ENCODE measurements at regions of chr5 and their contacts with region 1.

Region 1: DNA sequence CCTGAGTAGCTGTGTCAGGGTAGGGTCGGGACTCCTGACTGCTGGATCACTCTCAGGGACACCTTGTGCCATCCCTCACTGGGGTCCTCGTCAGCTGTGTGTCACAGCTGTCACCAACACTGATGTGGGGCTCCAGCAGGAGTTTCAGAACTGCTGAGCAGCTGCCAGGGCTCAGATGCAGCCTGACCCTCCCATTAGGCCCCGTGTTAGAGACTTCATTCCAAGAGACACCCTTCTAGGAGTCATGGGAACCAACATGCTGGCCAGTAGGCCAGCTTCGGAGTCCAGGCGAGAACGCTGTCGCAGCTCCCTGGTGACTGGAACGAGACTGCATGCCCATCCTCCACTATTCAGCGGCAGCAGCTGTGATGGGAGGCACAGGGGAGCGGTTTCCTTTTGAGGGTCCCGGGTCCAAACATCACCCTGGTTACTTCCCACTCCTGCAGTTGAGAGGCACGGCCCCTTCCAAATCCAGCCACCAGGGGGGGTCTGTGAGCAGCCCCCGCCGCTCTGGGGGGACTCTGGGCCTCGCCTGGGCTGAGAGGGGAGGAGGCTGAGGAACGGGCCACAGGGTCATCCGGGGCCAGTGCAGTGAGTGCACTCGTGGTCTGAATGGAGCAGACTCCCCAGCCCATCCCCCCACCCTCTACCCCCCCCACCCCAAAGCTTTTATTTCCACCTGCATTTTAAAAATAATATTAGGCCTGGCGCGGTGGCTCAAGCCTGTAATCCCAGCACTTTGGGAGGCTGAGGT is 12.6 kb upstream of the TCF7 start:
- DNase-seq: peak; percentile 59 to 79 (median 75)
- H3K4me3 ChIP-seq: peak overlapping the region in 1 of 7 experiments; percentile 45
- H3K27ac ChIP-seq: no peak overlapping the region
- H3K4me1 ChIP-seq: peaks cover 0 to 8% (median 2%) of the 10 kb centered on the region in 4 experiments
- H3K27me3 ChIP-seq: no peaks in the 10 kb centered on the region

Region 2: GRCh38 chr5:134073404-134073803 is 28.5 kb before region 1 on chr5:
- CTCF ChIA-PET with region 1: interaction called, 11 read pairs
- POLR2A ChIA-PET with region 1: no interaction called
- DNase-seq: peak in 2 of 3 donors; percentile 32 to 44
- H3K4me3 ChIP-seq: no peak overlapping the region
- H3K27ac ChIP-seq: no peak overlapping the region
- H3K4me1 ChIP-seq: peaks cover 0 to 12% (median 10%) of the 10 kb centered on the region in 4 experiments
- H3K27me3 ChIP-seq: peaks cover 0 to 7% (median 0%) of the 10 kb centered on the region in 5 experiments

Region 3: GRCh38 chr5:134113902-134114875 is 12.3 kb after region 1 on chr5 and contains the start of gene TCF7:
- CTCF ChIA-PET with region 1: interaction called, 55 read pairs
- POLR2A ChIA-PET with region 1: no interaction called
- DNase-seq: peak; percentile 54 to 71 (median 66)
- H3K4me3 ChIP-seq: peak within 1 kb of the TSS; percentile 21 to 83 (median 64)
- H3K27ac ChIP-seq: no peak within 1 kb of the TSS
- H3K4me1 ChIP-seq: peaks cover 0 to 26% (median 21%) of the 10 kb centered on the region in 4 experiments
- H3K27me3 ChIP-seq: peaks cover 0 to 67% (median 21%) of the 10 kb centered on the region in 5 experiments

Region 4: DNA sequence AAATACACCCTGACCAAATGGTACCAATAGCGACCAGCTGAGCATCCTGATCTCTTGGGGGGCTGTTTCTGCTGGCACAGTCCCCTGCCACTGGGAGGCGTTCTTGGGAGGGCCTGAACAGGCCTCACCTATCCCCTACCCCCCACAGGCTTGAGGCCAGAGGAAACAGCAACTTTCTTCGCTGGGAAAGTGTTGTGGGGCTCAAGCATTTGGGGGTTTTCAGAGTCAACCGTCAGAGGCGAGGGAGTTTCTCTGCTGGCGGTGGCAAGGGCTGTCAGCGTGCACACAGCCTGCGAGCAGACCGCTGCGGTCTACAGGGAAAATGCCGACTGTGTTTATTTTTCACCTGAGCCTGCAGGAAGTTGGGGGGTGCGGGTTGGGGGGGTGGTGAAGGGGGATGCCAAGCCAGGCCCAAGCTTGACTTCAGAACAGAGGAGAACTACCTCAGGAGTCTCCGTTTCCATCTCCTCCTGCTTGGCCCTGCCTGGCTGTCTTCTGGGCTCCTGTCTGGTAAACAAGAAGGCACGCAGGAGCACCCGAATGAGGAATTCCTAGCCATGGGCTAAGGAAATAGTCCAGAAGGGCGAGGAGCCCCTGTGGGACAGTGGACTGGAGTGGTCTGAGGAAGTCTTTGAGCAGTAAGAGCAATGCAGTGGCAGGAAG is 30.6 kb after region 1 on chr5:
- CTCF ChIA-PET with region 1: interaction called, 22 read pairs
- POLR2A ChIA-PET with region 1: no interaction called
- DNase-seq: peak; percentile 46 to 92 (median 90)
- H3K4me3 ChIP-seq: no peak overlapping the region
- H3K27ac ChIP-seq: peak overlapping the region in 1 of 2 experiments; percentile 46
- H3K4me1 ChIP-seq: peaks cover 0 to 30% (median 21%) of the 10 kb centered on the region in 4 experiments
- H3K27me3 ChIP-seq: no peaks in the 10 kb centered on the region

Region 5: DNA sequence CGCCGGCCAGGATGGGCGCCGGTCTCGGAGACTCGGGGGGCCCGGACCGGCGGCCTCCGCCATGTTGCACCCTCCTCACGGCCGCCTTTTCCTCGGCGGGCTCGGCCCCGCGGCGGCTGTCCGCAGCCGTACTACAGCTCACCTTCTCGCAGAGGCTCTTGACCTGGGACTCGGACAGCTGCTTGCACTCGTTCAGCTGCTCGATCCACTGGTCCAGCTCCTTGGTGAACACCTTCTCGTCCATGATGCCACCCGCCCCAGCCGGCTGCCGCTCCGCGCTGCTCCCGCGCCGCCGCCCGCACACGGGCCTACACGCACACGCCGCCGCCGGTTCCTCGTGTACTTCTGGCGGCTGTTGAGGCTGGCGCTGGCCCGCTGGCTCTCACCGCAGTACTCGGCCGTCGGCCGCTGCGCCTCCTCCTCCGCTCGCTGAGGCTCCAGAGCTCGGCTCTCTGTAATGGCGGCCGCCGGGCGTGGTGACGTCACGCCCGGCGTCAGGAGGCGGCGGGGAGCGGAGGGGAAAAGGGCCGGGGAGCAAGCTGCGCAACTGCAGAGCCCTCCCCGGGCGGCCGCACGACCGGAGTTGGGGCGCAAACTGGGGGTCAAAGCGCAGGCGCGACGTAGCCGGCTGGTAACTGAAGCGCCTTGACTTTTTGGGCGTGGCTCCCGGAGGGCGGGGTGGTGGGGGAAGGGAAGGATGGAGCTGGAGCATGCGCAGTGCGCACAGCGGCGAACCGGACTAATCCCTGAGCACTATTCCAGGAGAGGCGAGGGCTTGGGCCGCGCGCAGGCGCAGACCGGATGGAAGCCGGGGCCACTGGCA is 124.0 kb after region 1 on chr5 and contains the start of gene PPP2CA:
- CTCF ChIA-PET with region 1: no interaction called
- POLR2A ChIA-PET with region 1: no interaction called
- DNase-seq: peak; percentile 98 to 99 (median 99)
- H3K4me3 ChIP-seq: peak within 1 kb of the TSS; percentile 95 to 100 (median 98)
- H3K27ac ChIP-seq: peak within 1 kb of the TSS; percentile 99 to 100
- H3K4me1 ChIP-seq: peaks cover 25 to 44% (median 33%) of the 10 kb centered on the region in 4 experiments
- H3K27me3 ChIP-seq: no peaks in the 10 kb centered on the region

Region 6: DNA sequence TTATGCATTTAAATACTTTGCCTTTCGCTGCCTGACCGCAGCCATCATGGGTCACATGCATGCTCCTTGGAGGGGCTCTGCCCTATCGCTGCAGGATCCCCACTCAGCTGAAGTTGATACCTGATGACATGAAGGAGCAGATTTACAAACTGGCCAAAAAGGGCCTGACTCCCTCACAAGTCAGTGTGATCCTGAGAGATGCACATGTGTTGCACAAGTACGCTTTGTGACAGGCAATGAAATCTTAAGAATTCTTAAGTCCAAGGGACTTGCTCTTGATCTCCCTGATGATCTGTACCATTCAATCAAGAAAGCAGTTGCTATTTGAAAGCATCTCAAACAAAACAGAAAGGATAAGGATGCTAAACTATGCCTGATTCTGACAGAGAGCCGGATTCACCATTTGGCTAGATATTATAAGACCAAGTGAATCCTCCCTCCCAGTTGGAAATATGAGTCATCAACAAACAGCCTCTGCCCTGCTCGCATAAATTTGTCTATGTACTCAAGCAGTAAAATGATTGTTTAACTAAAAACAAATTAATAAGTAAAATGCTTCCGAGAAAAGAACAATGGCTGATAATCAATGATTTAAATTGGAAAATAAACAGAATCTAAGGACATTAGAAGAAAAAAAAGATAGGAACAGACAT is 165.6 kb after region 1 on chr5:
- CTCF ChIA-PET with region 1: no interaction called
- POLR2A ChIA-PET with region 1: no interaction called
- DNase-seq: no peak
- H3K4me3 ChIP-seq: no peak overlapping the region
- H3K27ac ChIP-seq: no peak overlapping the region
- H3K4me1 ChIP-seq: no peaks in the 10 kb centered on the region
- H3K27me3 ChIP-seq: no peaks in the 10 kb centered on the region

Measured in common myeloid progenitor, CD34-positive (primary cell).